Spleen (tissue), 13 donors: ENCODE measurements at regions of chr3 and their contacts with region 1.

Region 1: GRCh38 chr3:117997201-117998049 is 1037.2 kb downstream of the IGSF11 start:
- DNase-seq: peak; percentile 87
- H3K4me3 ChIP-seq: peak overlapping the region in 7 of 8 donors; percentile 18 to 66 (median 40)
- H3K27ac ChIP-seq: no peak overlapping the region
- H3K4me1 ChIP-seq: peaks cover 0 to 21% (median 7%) of the 10 kb centered on the region in 6 donors
- H3K27me3 ChIP-seq: peaks cover 0 to 37% (median 5%) of the 10 kb centered on the region in 7 donors
- CTCF ChIP-seq: peak in 9 of 11 experiments; percentile 41 to 80 (median 65)
- POLR2A ChIP-seq: no peak

Region 2: GRCh38 chr3:116770815-116771450 is 1226.5 kb before region 1 on chr3:
- intact Hi-C with region 1: loop called (anchors 5 kb)
- DNase-seq: no peak
- H3K4me3 ChIP-seq: no peak overlapping the region
- H3K27ac ChIP-seq: no peak overlapping the region
- H3K4me1 ChIP-seq: peaks cover 0 to 5% (median 0%) of the 10 kb centered on the region in 6 donors
- H3K27me3 ChIP-seq: no peaks in the 10 kb centered on the region
- CTCF ChIP-seq: peak; percentile 38 to 82 (median 75)
- POLR2A ChIP-seq: no peak

Region 3: GRCh38 chr3:118075873-118076272 is 78.4 kb after region 1 on chr3:
- intact Hi-C with region 1: no loop called
- DNase-seq: no peak
- H3K4me3 ChIP-seq: no peak overlapping the region
- H3K27ac ChIP-seq: no peak overlapping the region
- H3K4me1 ChIP-seq: no peaks in the 10 kb centered on the region
- H3K27me3 ChIP-seq: no peaks in the 10 kb centered on the region
- CTCF ChIP-seq: no peak
- POLR2A ChIP-seq: no peak

Region 4: DNA sequence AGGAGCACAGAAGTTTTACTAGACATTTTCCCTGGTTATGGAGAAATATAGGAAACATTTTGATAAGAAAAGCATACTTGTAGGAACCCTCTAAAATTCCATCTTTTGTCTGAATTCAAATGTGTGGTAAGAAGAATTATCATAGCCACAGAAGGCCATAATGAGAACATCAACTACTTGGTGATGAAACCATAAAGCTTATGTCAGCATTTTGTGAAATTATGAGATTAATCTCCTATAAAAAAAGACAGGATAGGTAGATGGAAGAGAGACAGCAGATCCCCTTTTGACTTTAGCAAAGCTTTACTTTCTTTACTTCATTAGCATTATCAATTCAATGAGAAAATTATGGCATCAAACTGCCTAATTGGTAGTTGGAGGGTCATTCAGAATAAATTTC is 340.2 kb after region 1 on chr3:
- intact Hi-C with region 1: no loop called
- DNase-seq: no peak
- H3K4me3 ChIP-seq: no peak overlapping the region
- H3K27ac ChIP-seq: no peak overlapping the region
- H3K4me1 ChIP-seq: no peaks in the 10 kb centered on the region
- H3K27me3 ChIP-seq: no peaks in the 10 kb centered on the region
- CTCF ChIP-seq: no peak
- POLR2A ChIP-seq: no peak